ENCODE measurements at regions of chr2 and their contacts with region 1.

Region 1: GRCh38 chr2:62415019-62415431 is 91.0 kb downstream of the TMEM17 start:
- DNase-seq: no peak
- H3K4me3 ChIP-seq: no peak overlapping the region
- H3K27ac ChIP-seq: no peak overlapping the region
- H3K4me1 ChIP-seq: peaks cover 12 to 28% (median 18%) of the 10 kb centered on the region in 4 donors
- H3K27me3 ChIP-seq: no peaks in the 10 kb centered on the region
- CTCF ChIP-seq: no peak
- EP300 ChIP-seq: no peak
- POLR2A ChIP-seq: no peak

Region 2: GRCh38 chr2:61910603-61911002 is 504.4 kb before region 1 on chr2:
- intact Hi-C with region 1: loop called (anchors 5 kb)
- DNase-seq: no peak
- H3K4me3 ChIP-seq: no peak overlapping the region
- H3K27ac ChIP-seq: no peak overlapping the region
- H3K4me1 ChIP-seq: peaks cover 11 to 51% (median 35%) of the 10 kb centered on the region in 4 donors
- H3K27me3 ChIP-seq: no peaks in the 10 kb centered on the region
- CTCF ChIP-seq: no peak
- EP300 ChIP-seq: no peak
- POLR2A ChIP-seq: no peak

Region 3: DNA sequence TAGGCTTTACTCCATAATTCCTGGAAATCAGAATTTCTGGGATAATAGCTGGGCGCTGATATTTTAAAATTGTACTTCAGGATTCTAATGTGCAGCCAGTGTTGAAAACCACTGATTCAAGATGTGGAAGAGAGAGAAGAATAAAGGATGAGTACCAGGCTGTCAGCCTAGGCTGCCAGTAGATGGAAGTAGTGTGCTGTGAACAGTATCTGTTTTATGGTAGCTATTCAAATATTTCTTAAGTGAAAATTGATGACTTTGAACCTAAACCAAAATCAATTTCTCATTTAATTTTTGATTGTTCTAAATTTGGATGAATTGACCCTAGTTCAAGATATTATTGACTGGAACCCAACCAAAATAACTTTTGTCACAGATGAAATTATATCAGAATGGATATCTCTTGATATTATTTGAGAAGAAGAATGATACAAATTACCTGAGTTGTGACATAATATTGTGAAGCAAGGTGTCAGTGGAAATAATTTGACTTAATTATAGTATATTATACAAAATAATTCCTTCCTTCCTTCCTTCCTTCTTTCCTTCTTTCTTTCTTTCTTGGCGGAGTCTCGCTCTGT is 421.5 kb before region 1 on chr2:
- intact Hi-C with region 1: loop called (anchors 10 kb)
- DNase-seq: peak in 1 of 2 donors; percentile 75
- H3K4me3 ChIP-seq: no peak overlapping the region
- H3K27ac ChIP-seq: no peak overlapping the region
- H3K4me1 ChIP-seq: peaks cover 0 to 10% (median 2%) of the 10 kb centered on the region in 4 donors
- H3K27me3 ChIP-seq: no peaks in the 10 kb centered on the region
- CTCF ChIP-seq: peak in 3 of 7 experiments; percentile 26 to 39 (median 28)
- EP300 ChIP-seq: no peak
- POLR2A ChIP-seq: no peak

Region 4: GRCh38 chr2:62826141-62826540 is 411.1 kb after region 1 on chr2:
- intact Hi-C with region 1: no loop called
- DNase-seq: no peak
- H3K4me3 ChIP-seq: no peak overlapping the region
- H3K27ac ChIP-seq: no peak overlapping the region
- H3K4me1 ChIP-seq: peaks cover 6 to 30% (median 17%) of the 10 kb centered on the region in 4 donors
- H3K27me3 ChIP-seq: no peaks in the 10 kb centered on the region
- CTCF ChIP-seq: no peak
- EP300 ChIP-seq: no peak
- POLR2A ChIP-seq: no peak